ENCODE measurements at regions of chr17 and their contacts with region 1.

Region 1: GRCh38 chr17:71976011-71976649 is 144.7 kb upstream of the SOX9 start:
- DNase-seq: peak; percentile 99
- ATAC-seq: peak; percentile 91
- H3K4me3 ChIP-seq: peak overlapping the region; percentile 45; the same call in 1 of the 2 replicates
- H3K27ac ChIP-seq: peak overlapping the region; percentile 95
- H3K4me1 ChIP-seq: peaks cover 26% of the 10 kb centered on the region
- H3K27me3 ChIP-seq: no peaks in the 10 kb centered on the region
- CTCF ChIP-seq: no peak

Region 2: DNA sequence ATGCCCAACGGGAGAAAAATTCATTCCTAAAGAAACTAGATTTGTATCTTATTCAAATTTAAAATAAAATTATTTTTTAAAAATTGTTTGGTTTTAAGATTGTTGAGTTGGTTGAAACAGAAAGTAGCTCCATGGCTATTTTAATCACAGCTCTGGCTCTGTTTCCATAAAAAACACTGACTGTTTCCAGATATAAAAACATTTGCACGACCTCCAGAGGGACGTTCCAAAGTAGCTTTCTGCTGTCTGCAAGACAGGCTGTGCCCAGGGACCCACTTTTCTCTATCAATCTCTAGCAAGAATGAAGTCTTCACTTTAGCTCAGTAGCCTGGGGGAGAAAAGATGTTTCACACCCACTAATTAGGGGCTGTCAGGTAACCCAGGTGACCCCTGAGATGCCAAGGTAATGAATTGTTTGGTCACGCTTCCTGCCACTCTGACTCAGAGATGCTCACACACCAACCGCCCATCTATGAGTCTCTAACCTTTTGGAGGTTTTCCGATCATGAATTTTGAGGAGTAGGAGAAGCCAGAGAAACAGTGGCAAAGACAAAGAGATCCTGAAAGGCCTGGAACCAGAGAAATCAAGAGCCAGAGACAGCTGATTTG is 75.4 kb before region 1 on chr17:
- CTCF ChIA-PET with region 1: no interaction called
- POLR2A ChIA-PET with region 1: no interaction called
- intact Hi-C with region 1: loop called (anchors 5 kb)
- DNase-seq: peak; percentile 98
- ATAC-seq: peak; percentile 82
- H3K4me3 ChIP-seq: peak overlapping the region; percentile 20; the same call in 1 of the 2 replicates
- H3K27ac ChIP-seq: peak overlapping the region; percentile 80
- H3K4me1 ChIP-seq: peaks cover 54% of the 10 kb centered on the region
- H3K27me3 ChIP-seq: no peaks in the 10 kb centered on the region
- CTCF ChIP-seq: no peak

Region 3: DNA sequence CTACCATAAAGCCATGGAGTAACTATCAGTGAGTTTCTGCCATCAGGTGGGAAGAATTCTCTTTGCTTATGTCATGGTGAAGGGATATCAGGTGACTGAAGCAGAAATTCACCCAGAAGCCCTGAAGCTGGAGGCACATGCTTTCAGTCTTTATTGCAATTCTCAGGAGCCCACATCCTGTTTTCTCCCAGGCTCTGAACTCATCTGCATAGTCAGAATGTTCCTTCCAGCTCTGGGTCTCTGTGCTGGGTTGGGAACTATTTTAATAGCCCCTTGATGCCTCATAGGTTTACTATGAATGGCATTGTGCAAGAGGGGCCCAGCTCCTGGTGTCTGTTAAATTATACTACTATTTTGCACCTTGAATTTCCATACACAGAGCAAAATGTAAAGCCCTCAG is 53.7 kb before region 1 on chr17:
- CTCF ChIA-PET with region 1: no interaction called
- POLR2A ChIA-PET with region 1: no interaction called
- intact Hi-C with region 1: loop called (anchors 1 kb)
- DNase-seq: peak; percentile 98
- ATAC-seq: peak; percentile 78
- H3K4me3 ChIP-seq: no peak overlapping the region
- H3K27ac ChIP-seq: peak overlapping the region; percentile 81
- H3K4me1 ChIP-seq: peaks cover 50% of the 10 kb centered on the region
- H3K27me3 ChIP-seq: no peaks in the 10 kb centered on the region
- CTCF ChIP-seq: no peak

Region 4: GRCh38 chr17:72030067-72030899 is 54.2 kb after region 1 on chr17:
- CTCF ChIA-PET with region 1: no interaction called
- POLR2A ChIA-PET with region 1: no interaction called
- intact Hi-C with region 1: loop called (anchors 5 kb)
- DNase-seq: peak; percentile 63
- ATAC-seq: peak; percentile 85
- H3K4me3 ChIP-seq: peak overlapping the region; percentile 58
- H3K27ac ChIP-seq: no peak overlapping the region
- H3K4me1 ChIP-seq: peaks cover 5% of the 10 kb centered on the region; the same call in 1 of the 2 replicates
- H3K27me3 ChIP-seq: no peaks in the 10 kb centered on the region
- CTCF ChIP-seq: peak; percentile 53

Region 5: GRCh38 chr17:72079700-72080099 is 103.6 kb after region 1 on chr17:
- CTCF ChIA-PET with region 1: no interaction called
- POLR2A ChIA-PET with region 1: no interaction called
- intact Hi-C with region 1: loop called (anchors 1 kb)
- DNase-seq: peak; percentile 80
- ATAC-seq: peak; percentile 97
- H3K4me3 ChIP-seq: no peak overlapping the region
- H3K27ac ChIP-seq: no peak overlapping the region
- H3K4me1 ChIP-seq: peaks cover 14% of the 10 kb centered on the region
- H3K27me3 ChIP-seq: no peaks in the 10 kb centered on the region
- CTCF ChIP-seq: no peak

Region 6: GRCh38 chr17:72097144-72097543 is 121.0 kb after region 1 on chr17:
- CTCF ChIA-PET with region 1: no interaction called
- POLR2A ChIA-PET with region 1: no interaction called
- intact Hi-C with region 1: loop called (anchors 1 kb)
- DNase-seq: peak; percentile 99
- ATAC-seq: peak; percentile 98
- H3K4me3 ChIP-seq: peak overlapping the region; percentile 3; the same call in 1 of the 2 replicates
- H3K27ac ChIP-seq: peak overlapping the region; percentile 65
- H3K4me1 ChIP-seq: peaks cover 18% of the 10 kb centered on the region
- H3K27me3 ChIP-seq: no peaks in the 10 kb centered on the region
- CTCF ChIP-seq: no peak

Region 7: DNA sequence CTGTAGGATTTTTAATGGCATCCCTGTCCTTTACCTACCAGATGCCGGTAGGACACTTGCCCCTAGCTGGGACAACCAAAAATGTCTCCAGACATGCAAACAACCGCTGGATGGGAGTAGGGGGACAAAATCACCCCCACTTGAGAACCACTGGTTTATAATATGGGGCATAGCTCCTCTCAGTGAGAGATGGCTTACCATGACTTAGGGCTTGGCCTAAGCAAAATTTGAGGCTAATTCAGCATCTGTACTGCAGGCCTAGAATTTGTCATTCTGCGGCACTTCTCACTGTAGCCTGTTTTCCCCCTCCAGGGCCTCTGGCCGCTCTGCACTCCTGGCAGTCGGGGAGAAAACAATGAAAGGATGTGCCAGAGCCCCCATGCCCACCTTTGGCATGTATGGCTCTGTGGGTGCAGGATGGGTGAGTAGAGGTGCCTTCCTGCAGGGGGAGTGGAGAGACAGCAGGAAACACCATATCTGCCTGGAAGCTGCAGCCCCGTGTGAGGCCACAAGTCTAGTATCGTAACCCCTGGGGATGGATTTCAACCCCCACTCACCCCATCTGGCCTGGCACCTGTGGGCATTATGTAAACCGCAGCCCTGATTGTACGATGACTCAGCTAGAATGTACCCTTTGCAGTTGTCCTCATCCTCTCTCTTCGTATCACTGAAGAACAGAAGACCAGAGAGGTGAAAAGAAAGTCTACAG is 412.8 kb after region 1 on chr17:
- CTCF ChIA-PET with region 1: no interaction called
- POLR2A ChIA-PET with region 1: no interaction called
- intact Hi-C with region 1: loop called (anchors 5 kb)
- DNase-seq: peak; percentile 89
- ATAC-seq: peak; percentile 2
- H3K4me3 ChIP-seq: no peak overlapping the region
- H3K27ac ChIP-seq: peak overlapping the region; percentile 97
- H3K4me1 ChIP-seq: peaks cover 84% of the 10 kb centered on the region
- H3K27me3 ChIP-seq: no peaks in the 10 kb centered on the region
- CTCF ChIP-seq: peak; percentile 62